Activated T-helper 1 cell treated with anti-CD3 and anti-CD28 coated beads, Interleukin-12 subunit alpha, Interleukin-12 subunit beta, Interleukin-2, Interleukin-4 antibody, amounts not matched to agents 30 ng/mL and 10 ng/mL and 1 ng/mL, durations not matched to agents 14 hours and 24 hours and 36 hours (primary cell): ENCODE measurements at regions of chr17 and their contacts with region 1.

Region 1: DNA sequence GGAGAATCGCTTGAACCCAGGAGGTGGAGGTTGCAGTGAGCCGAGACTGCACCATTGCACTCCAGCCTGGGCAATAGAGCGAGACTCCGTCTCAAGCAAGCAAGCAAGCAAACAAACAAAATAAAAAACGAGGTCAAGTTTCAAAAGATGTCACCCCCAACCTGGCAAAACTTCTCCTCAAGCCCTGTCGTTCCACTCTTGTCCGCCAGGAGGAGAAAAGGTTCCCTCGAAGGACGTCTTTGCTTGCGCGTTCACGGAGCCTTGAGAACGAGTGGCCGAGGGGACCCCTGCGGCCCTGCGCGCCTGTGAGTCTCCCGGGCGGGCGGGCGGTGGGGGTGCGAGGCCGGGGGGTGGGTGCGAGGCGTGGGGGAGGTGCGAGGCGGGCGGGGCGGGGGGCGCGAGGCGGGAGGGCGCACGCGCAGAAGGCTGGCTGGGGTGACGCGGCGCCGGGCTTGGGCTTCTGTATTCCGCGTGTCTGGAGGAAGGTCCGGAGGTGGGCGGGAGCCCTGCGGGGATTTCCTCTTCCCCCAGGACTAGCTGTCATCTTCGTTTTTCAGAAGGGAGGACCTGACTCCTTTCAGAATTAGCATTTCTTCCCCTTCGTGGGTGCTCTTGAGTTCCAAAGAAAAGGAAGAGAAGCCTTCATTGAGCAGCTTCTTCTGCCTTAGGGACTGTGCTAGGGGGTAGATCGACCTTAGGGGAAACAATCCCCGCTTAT is 3.7 kb downstream of the SLC52A1 start:
- DNase-seq: peak; percentile 73
- H3K4me3 Mint-ChIP-seq: peak overlapping the region; percentile 86
- H3K27ac Mint-ChIP-seq: peak overlapping the region; percentile 95
- H3K4me1 Mint-ChIP-seq: peaks cover 19% of the 10 kb centered on the region
- H3K27me3 Mint-ChIP-seq: peaks cover 7% of the 10 kb centered on the region

Region 2: DNA sequence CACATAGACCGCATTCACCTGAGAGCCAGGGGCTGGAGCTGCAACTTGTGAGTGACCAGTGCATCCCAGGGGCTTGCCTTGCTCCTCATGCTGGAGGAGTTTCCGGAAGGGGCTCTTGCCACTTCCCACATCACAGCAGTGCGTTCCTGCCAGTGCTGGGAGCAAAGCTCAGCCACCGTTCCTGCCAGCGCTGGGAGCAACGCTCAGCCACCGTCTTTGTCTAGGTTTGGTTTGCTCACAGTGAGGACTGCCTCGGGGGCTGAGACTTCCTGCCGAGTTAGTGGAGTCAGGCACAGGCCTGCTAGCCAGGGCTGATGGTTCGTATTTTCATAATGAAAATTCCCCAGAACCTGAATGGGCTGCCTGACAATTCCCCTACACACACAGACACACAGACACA is 123.2 kb before region 1 on chr17:
- intact Hi-C with region 1: loop called (anchors 1 kb)
- DNase-seq: no peak
- H3K4me3 Mint-ChIP-seq: no peak overlapping the region
- H3K27ac Mint-ChIP-seq: no peak overlapping the region
- H3K4me1 Mint-ChIP-seq: peaks cover 12% of the 10 kb centered on the region
- H3K27me3 Mint-ChIP-seq: peaks cover 12% of the 10 kb centered on the region

Region 3: GRCh38 chr17:4986951-4987766 is 44.4 kb before region 1 on chr17 and contains the start of gene CAMTA2:
- intact Hi-C with region 1: loop called (anchors 2 kb)
- DNase-seq: peak; percentile 82
- H3K4me3 Mint-ChIP-seq: peak within 1 kb of the TSS; percentile 95
- H3K27ac Mint-ChIP-seq: peak within 1 kb of the TSS; percentile 89
- H3K4me1 Mint-ChIP-seq: peaks cover 39% of the 10 kb centered on the region
- H3K27me3 Mint-ChIP-seq: no peaks in the 10 kb centered on the region
- total RNA-seq, gene CAMTA2: 98.5 and 103 TPM in 2 replicates

Region 4: GRCh38 chr17:5042157-5043022 is 10.9 kb after region 1 on chr17:
- intact Hi-C with region 1: loop called (anchors 1 kb)
- DNase-seq: peak; percentile 28
- H3K4me3 Mint-ChIP-seq: peak overlapping the region; percentile 83
- H3K27ac Mint-ChIP-seq: peak overlapping the region; percentile 92
- H3K4me1 Mint-ChIP-seq: peaks cover 38% of the 10 kb centered on the region
- H3K27me3 Mint-ChIP-seq: no peaks in the 10 kb centered on the region

Region 5: GRCh38 chr17:5065227-5065744 is 33.8 kb after region 1 on chr17:
- intact Hi-C with region 1: loop called (anchors 1 kb)
- DNase-seq: no peak
- H3K4me3 Mint-ChIP-seq: no peak overlapping the region
- H3K27ac Mint-ChIP-seq: peak overlapping the region; percentile 30
- H3K4me1 Mint-ChIP-seq: peaks cover 9% of the 10 kb centered on the region
- H3K27me3 Mint-ChIP-seq: peaks cover 4% of the 10 kb centered on the region

Region 6: GRCh38 chr17:5097101-5097834 is 65.7 kb after region 1 on chr17:
- intact Hi-C with region 1: no loop called
- DNase-seq: no peak
- H3K4me3 Mint-ChIP-seq: no peak overlapping the region
- H3K27ac Mint-ChIP-seq: no peak overlapping the region
- H3K4me1 Mint-ChIP-seq: no peaks in the 10 kb centered on the region
- H3K27me3 Mint-ChIP-seq: peaks cover 7% of the 10 kb centered on the region

Region 7: GRCh38 chr17:5111402-5112204 is 80.1 kb after region 1 on chr17 and contains the start of gene ZNF232:
- intact Hi-C with region 1: loop called (anchors 10 kb)
- DNase-seq: peak; percentile 91
- H3K4me3 Mint-ChIP-seq: peak within 1 kb of the TSS; percentile 86
- H3K27ac Mint-ChIP-seq: peak within 1 kb of the TSS; percentile 79
- H3K4me1 Mint-ChIP-seq: peaks cover 13% of the 10 kb centered on the region
- H3K27me3 Mint-ChIP-seq: peaks cover 6% of the 10 kb centered on the region
- total RNA-seq, gene ZNF232: 17.3 and 19.3 TPM in 2 replicates